AG04450 (cell line): ENCODE measurements at regions of chr16 and their contacts with region 1.

Region 1: DNA sequence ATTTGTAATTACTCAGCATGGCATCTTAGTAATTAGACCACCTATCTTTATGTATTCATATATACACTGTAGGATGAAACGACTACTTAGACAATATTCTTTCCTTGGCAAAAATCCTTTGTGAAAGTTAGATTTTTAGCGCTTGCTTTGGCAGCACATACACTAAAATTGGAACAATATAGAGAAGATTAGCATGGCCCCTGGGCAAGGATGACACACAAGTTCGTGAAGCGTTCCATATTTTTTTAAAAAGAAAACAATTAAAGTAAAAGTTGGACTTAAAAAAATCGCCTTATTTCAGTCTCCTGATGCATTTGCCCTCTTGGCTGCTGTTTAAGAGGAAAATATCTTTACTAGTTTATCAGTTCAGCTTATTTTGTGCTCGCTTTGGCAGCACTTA is 10.5 kb downstream of the IGSF6 start:
- DNase-seq: no peak
- H3K4me3 ChIP-seq: no peak overlapping the region
- H3K27ac ChIP-seq: no peak overlapping the region
- H3K27me3 ChIP-seq: no peaks in the 10 kb centered on the region
- CTCF ChIP-seq: no peak

Region 2: GRCh38 chr16:21584817-21585216 is 57.1 kb before region 1 on chr16:
- CTCF ChIA-PET with region 1: interaction called, 12 read pairs
- POLR2A ChIA-PET with region 1: no interaction called
- DNase-seq: no peak
- H3K4me3 ChIP-seq: no peak overlapping the region
- H3K27ac ChIP-seq: no peak overlapping the region
- H3K27me3 ChIP-seq: peaks cover 3% of the 10 kb centered on the region
- CTCF ChIP-seq: no peak

Region 3: DNA sequence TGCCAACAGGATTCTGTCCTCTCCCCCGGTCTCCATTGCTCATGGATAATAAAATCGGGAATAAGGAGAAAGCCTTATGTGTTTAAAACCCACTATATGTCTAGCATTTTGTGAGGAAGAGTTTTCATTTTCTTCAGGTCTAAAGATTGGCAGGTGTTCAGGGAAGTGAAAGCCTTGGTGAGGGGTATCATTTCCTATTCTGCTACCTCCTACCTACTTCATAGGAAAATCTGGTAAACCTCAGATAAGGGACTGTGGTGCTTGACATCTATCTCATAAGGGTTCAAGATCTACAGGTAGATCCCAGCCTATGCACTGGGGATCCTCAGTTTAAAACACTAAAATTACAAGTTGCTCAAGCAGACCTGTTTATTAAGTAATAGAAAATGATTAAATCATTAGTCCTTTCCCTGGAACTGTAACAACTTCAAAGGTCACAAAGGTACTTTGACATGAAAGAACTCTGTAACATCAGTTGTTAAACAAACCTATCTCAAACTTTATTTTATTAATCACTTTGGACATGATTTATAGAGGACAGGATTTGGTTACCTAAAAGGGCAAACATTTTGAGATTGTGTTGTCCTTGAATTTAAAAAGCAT is 372.5 kb after region 1 on chr16:
- CTCF ChIA-PET with region 1: no interaction called
- POLR2A ChIA-PET with region 1: no interaction called
- DNase-seq: no peak
- H3K4me3 ChIP-seq: no peak overlapping the region
- H3K27ac ChIP-seq: no peak overlapping the region
- H3K27me3 ChIP-seq: no peaks in the 10 kb centered on the region
- CTCF ChIP-seq: no peak

Region 4: DNA sequence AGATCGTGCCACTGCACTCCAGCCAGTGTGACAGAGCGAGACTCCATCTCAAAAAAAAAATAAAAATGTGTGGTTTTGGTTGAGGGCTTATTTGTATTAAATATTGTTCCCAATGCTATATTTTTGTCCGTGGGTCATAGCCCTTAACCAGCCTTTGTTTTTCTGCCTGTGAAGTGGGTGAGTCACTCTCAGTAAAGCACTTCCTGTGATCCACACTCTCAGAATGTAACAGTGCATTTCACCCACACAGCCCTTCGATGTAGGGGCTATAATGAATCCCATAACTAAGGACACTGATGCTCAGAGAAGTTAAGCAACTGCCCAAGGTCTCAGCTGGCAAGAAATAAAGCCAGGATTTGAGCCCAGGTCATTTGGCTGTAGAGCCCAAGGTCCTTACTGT is 620.5 kb after region 1 on chr16:
- CTCF ChIA-PET with region 1: no interaction called
- POLR2A ChIA-PET with region 1: no interaction called
- DNase-seq: no peak
- H3K4me3 ChIP-seq: no peak overlapping the region
- H3K27ac ChIP-seq: no peak overlapping the region
- H3K27me3 ChIP-seq: no peaks in the 10 kb centered on the region
- CTCF ChIP-seq: no peak